Transverse colon (tissue), 4 donors: ENCODE measurements at regions of chr3 and their contacts with region 1.

Region 1: GRCh38 chr3:88369337-88369736 is 219.6 kb downstream of the C3orf38 start:
- DNase-seq: no peak
- H3K4me3 ChIP-seq: no peak overlapping the region
- H3K27ac ChIP-seq: no peak overlapping the region
- H3K4me1 ChIP-seq: no peaks in the 10 kb centered on the region
- H3K27me3 ChIP-seq: no peaks in the 10 kb centered on the region
- CTCF ChIP-seq: no peak
- EP300 ChIP-seq: no peak
- POLR2A ChIP-seq: no peak

Region 2: DNA sequence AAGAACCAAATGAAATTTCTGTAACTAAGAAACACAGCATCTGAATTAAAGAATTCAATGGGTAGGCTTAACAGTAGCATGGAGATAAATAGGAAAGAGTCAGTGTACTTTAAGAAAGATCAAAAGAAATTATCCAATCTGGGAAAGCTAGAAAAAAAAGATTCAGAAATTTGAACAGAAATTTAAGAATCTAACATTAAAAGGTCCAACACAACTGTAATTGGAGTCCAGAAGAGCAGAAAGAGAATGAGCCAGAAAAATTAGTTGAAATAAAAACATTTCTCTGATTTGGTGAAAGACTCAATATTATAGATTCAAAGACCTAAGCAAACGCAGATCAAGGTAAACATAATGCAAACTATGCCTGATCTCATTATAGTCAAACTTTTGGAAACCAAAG is 32.4 kb before region 1 on chr3:
- in situ Hi-C with region 1: no loop called
- intact Hi-C with region 1: loop called (anchors 1 kb)
- DNase-seq: no peak
- H3K4me3 ChIP-seq: no peak overlapping the region
- H3K27ac ChIP-seq: no peak overlapping the region
- H3K4me1 ChIP-seq: no peaks in the 10 kb centered on the region
- H3K27me3 ChIP-seq: no peaks in the 10 kb centered on the region
- CTCF ChIP-seq: no peak
- EP300 ChIP-seq: no peak
- POLR2A ChIP-seq: no peak